OCI-LY7 (cell line): ENCODE measurements at regions of chr2 and their contacts with region 1.

Region 1: GRCh38 chr2:60794277-60794863 is 38.3 kb downstream of the PAPOLG start:
- DNase-seq: peak; percentile 64
- H3K4me3 ChIP-seq: no peak overlapping the region
- H3K27ac ChIP-seq: no peak overlapping the region
- H3K4me1 ChIP-seq: peaks cover 25% of the 10 kb centered on the region
- CTCF ChIP-seq: peak; percentile 96

Region 2: DNA sequence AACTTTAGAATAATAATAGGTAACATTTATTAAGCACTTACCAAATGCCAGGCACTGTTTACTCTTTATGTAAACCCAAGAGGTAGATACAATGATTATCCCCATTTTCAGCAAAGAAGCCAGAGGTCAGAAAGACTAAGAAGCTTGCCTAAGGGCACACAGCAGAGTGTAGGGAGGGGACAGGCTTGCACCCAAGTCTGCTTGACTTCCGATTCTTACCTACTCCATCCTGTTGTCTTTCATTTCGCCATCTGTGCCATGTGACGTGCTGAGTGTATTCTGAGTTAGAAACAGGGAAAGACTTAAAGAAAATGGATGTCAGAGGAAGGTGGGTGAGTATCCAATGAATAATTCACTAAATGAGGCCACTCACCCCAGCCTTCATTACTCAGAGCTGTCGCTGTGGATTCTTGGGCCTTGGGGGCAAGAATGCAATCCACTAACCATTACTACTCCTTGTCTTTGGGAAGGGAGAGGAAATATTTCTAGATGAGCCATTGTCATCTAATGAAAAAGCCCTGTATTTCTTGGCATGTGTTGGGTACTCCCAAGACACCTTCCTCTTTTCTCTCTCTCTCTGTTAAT is 164.5 kb before region 1 on chr2:
- CTCF ChIA-PET with region 1: no interaction called
- POLR2A ChIA-PET with region 1: no interaction called
- intact Hi-C with region 1: no loop called
- DNase-seq: no peak
- H3K4me3 ChIP-seq: no peak overlapping the region
- H3K27ac ChIP-seq: no peak overlapping the region
- H3K4me1 ChIP-seq: no peaks in the 10 kb centered on the region
- CTCF ChIP-seq: no peak

Region 3: DNA sequence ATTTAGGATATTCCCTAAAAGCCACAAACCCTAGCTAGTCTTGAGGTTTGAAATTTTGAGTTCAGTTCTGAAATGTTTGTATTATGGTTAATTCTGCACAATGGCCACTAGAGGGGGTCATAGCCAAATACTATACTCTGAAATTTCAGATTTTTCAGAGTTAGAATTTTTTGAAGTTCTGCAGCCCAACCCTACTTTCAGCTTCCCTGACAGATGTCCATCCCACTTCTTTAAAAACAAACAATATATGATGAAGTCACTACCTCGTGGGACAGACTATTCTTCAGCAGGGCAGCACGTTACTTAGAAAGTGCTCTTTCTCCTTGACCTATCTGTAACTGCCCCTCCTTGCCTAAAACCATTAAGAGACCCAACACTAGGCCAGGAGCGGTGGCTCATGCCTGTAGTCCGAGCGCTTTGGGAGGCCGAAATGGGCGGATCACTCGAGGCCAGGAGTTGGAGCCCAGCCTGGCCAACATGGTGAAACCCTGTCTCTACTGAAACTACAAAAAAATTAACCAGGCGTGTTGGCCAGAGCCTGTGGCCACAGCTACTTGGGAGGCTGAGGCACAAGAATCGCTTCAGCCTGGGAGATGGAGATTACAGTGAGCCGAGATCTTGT is 86.5 kb before region 1 on chr2:
- CTCF ChIA-PET with region 1: no interaction called
- POLR2A ChIA-PET with region 1: no interaction called
- intact Hi-C with region 1: loop called (anchors 5 kb)
- DNase-seq: peak; percentile 68
- H3K4me3 ChIP-seq: no peak overlapping the region
- H3K27ac ChIP-seq: no peak overlapping the region
- H3K4me1 ChIP-seq: no peaks in the 10 kb centered on the region
- CTCF ChIP-seq: peak; percentile 96

Region 4: DNA sequence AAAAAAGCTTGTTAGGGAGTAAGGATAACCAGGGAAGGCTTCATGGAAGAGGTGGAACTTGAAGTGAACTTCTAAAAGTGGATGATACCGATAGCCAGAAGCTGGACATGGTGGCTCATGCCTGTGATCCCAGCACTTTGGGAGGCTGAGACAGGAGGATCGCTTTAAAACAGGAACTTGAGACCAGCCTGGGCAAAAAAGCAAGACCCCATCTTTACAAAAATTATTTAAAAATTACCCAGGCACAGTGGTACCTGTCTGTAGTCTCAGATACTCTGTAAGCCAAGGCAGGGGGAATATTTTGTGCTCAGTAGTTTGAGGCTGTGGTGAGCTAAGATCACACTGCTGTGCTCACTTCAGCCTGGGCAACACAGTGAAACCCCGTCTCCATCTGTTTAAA is 28.1 kb before region 1 on chr2:
- CTCF ChIA-PET with region 1: no interaction called
- POLR2A ChIA-PET with region 1: no interaction called
- intact Hi-C with region 1: no loop called
- DNase-seq: no peak
- H3K4me3 ChIP-seq: no peak overlapping the region
- H3K27ac ChIP-seq: no peak overlapping the region
- H3K4me1 ChIP-seq: no peaks in the 10 kb centered on the region
- CTCF ChIP-seq: no peak

Region 5: GRCh38 chr2:61165946-61166345 is 371.6 kb after region 1 on chr2:
- CTCF ChIA-PET with region 1: no interaction called
- POLR2A ChIA-PET with region 1: no interaction called
- intact Hi-C with region 1: no loop called
- DNase-seq: no peak
- H3K4me3 ChIP-seq: no peak overlapping the region
- H3K27ac ChIP-seq: no peak overlapping the region
- H3K4me1 ChIP-seq: no peaks in the 10 kb centered on the region
- CTCF ChIP-seq: 0 out of 2 replicates have a peak, but pooled peaks have one; percentile 11